ENCODE measurements at regions of chr4 and their contacts with region 1.

Region 1: DNA sequence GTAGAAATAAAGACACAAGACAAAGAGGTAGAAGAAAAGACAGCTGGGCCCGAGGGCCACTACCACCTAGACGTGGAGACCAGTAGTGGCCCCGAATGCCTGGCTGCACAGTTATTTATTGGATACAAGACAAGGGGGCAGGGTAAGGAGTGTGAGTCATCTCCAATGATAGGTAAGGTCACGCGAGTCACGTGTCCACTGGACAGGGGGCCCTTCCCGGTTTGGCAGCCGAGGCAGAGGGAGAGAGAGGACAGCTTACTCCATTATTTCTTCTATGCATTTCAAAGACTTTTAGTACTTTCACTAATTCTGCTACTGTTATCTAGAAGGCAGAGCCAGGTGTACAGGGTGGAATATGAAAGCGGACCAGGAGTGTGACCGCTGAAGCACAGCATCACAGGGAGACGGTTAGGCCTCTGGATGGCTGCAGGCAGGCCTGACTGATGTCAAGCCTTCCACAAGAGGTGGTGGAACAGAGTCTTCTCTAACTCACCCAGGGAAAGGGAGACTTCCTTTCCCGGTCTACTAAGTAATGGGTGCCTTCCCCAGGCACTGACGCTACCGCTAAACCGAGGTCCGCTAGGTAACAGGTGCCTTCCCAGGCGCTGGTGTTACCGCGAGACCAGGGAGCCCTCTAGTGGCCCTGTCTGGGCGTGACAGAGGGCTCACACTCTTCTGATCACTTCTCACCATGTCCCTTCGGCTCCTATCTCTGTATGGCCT is 44.9 kb downstream of the ZBTB49 start:
- DNase-seq: no peak
- H3K4me3 ChIP-seq: no peak overlapping the region
- H3K27ac ChIP-seq: no peak overlapping the region
- H3K4me1 ChIP-seq: no peaks in the 10 kb centered on the region
- H3K27me3 ChIP-seq: peaks cover 0 to 6% (median 0%) of the 10 kb centered on the region in 4 donors
- CTCF ChIP-seq: peak; percentile 28 to 81 (median 64)
- POLR2A ChIP-seq: no peak

Region 2: GRCh38 chr4:4256799-4257198 is 78.2 kb before region 1 on chr4:
- intact Hi-C with region 1: loop called (anchors 5 kb)
- DNase-seq: no peak
- H3K4me3 ChIP-seq: no peak overlapping the region
- H3K27ac ChIP-seq: no peak overlapping the region
- H3K4me1 ChIP-seq: no peaks in the 10 kb centered on the region
- H3K27me3 ChIP-seq: peaks cover 0 to 19% (median 0%) of the 10 kb centered on the region in 4 donors
- CTCF ChIP-seq: no peak
- POLR2A ChIP-seq: no peak

Region 3: DNA sequence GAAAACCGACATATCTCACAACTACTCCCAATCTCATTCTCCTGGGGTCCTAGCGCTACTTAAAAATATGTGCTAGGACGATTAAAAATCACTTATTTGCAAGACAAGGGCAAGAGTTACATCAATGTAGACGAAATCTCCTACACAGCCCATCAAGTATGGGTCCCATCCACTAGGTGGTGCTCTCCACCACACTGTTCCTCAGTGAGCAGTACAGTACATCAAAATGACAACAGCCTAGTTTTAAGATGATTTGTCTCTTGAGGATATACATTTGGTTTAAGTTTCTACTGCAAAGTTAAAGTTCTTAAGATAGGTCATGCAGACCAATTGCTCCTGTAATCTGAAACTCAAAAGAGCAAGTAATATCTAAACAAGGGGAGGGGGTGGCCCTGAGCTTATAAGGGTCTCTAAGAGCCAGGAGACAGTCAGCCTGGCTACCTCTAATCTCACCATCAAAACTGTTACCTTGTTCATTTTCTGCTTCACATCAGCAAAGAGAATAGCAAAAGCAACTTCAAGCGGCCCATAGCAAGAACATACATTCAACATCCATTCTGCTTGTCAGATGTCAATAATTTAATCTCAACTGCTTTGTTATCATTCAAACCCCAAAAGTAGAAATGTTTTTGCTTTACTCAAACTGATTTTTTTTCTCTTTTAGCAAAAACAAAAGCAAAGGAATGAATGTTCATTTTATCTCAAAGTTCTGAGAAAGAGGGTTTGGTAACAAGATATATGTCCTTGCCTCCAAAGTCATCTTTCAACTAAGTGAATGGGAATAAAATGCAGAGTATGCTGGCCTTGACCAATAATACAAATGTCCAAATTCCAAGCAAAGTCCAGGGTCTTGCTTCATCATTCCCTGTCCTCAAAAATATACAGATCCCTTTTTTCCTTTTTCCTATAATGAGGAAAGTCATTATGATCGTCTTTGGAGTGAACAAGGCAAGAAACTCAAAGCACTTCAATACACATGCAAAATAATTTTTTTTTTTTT is 153.7 kb after region 1 on chr4:
- intact Hi-C with region 1: no loop called
- DNase-seq: no peak
- H3K4me3 ChIP-seq: no peak overlapping the region
- H3K27ac ChIP-seq: no peak overlapping the region
- H3K4me1 ChIP-seq: no peaks in the 10 kb centered on the region
- H3K27me3 ChIP-seq: no peaks in the 10 kb centered on the region
- CTCF ChIP-seq: peak; percentile 59 to 88 (median 78)
- POLR2A ChIP-seq: no peak

Region 4: GRCh38 chr4:4880492-4880891 is 545.5 kb after region 1 on chr4:
- intact Hi-C with region 1: no loop called
- DNase-seq: no peak
- H3K4me3 ChIP-seq: no peak overlapping the region
- H3K27ac ChIP-seq: no peak overlapping the region
- H3K4me1 ChIP-seq: no peaks in the 10 kb centered on the region
- H3K27me3 ChIP-seq: peaks cover 0 to 84% (median 0%) of the 10 kb centered on the region in 4 donors
- CTCF ChIP-seq: peak in 1 of 6 experiments; percentile 32
- POLR2A ChIP-seq: no peak

Measured in esophagus squamous epithelium (tissue), 5 donors.